ENCODE measurements at regions of chr1 and their contacts with region 1.

Region 1: DNA sequence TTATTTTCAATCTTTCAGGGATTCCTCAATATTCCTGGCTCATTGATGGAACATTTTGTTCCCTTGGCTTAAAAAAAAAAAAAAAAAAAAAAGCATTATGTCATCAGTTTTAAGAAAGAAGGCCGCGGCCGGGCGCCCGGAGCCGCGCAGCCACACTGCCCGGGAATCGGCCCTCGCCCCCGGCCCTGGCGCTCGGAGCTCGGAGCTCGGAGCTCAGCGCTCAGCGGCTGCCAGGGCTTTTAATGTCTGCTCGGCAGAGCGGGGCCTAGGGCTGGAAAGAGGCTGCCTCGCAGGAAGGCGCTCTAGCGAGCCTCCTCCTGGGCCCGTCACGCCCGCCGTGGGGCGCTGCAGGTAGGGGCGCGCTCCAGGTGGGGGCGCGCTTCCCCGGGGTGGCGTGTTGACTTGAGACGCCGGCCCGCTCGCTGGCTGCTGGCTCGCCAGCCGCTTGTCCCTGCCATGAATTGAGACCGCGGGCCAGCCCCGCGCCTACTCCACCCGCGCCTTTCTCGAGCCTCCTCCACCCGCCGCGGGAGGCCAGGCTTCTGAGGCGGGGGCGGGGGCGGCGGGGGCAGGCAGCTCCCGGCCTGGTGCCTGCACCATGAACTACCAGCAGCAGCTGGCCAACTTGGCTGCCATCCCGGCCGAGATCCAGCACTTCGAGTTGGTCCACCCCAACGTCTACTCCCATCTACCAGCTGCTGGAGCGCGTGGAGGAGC is 5.4 kb upstream of the TDRD5 start:
- DNase-seq: peak; percentile 48
- H3K4me3 Mint-ChIP-seq: peak overlapping the region; percentile 21
- H3K27ac Mint-ChIP-seq: no peak overlapping the region
- H3K4me1 Mint-ChIP-seq: no peaks in the 10 kb centered on the region
- H3K27me3 Mint-ChIP-seq: peaks cover 14% of the 10 kb centered on the region
- CTCF ChIP-seq: peak; percentile 37

Region 2: DNA sequence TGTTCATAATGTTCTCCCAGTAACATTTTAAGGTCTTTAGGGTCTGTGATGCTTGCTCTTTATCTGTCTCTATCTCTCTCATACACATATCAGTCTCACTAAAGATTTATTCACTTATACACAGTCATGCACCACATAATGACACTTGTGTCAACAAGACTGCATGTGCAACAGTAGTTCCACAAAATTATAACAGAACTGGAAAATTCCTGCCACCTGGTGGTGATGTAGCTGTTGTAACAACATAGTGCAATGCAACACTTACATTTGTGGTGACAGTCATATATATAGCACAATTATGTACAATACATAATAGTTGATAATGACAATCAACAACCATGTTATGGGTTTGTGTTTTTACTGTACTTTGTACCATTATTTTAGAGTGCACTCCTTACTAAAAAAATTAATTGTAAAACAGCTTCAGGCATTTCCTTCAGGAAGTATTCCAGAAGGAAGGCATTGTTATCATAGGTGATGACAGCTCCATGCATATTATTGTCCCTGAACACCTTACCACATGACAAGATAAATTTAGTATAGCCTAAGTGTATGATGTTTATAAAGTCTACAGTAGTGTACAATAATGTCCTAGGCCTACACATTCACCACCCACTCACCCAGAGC is 13.5 kb after region 1 on chr1:
- CTCF ChIA-PET with region 1: interaction called, 19 read pairs
- POLR2A ChIA-PET with region 1: no interaction called
- intact Hi-C with region 1: no loop called
- DNase-seq: peak; percentile 73
- H3K4me3 Mint-ChIP-seq: no peak overlapping the region
- H3K27ac Mint-ChIP-seq: no peak overlapping the region
- H3K4me1 Mint-ChIP-seq: no peaks in the 10 kb centered on the region
- H3K27me3 Mint-ChIP-seq: peaks cover 69% of the 10 kb centered on the region
- CTCF ChIP-seq: peak; percentile 52